ENCODE measurements at regions of chrX and their contacts with region 1.

Region 1: DNA sequence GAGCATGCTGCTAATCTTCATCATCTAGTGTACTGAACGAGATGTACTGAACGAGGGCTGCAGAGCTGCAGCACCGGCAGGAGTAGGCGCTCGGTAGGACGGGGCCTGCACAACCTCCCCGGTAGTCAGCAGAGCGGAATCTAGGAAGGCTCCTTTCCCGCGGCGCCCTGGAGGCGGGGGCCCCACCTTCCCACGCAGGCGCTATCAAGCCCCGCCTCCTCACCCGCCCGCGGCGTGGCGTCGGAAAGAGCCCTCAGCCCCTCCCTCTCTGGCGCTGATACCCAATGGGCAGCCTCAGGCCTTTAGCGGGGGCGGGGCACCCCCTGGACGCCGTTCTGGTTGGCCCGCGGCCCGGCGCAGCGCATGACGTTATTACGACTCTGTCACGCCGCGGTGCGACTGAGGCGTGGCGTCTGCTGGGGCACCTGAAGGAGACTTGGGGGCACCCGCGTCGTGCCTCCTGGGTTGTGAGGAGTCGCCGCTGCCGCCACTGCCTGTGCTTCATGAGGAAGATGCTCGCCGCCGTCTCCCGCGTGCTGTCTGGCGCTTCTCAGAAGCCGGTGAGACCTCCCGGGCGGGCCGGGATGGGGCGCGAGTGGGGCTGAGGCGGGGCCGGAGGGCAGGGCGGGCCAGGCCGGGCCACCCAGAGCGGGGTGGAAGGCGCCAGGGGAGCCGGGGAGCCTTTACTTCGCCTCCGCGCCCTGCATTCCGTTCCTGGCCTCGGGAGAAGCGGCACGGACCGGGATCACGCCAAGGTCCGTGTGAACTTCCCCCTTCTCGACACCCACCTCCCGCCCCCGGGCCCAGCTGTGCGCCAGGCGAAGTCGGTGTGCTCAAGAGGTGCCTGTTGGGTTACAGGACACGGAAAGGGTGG is at the start of gene PDHA1:
- DNase-seq: peak; percentile 92
- H3K4me3 ChIP-seq: peak within 1 kb of the TSS; percentile 66 to 90 (median 87)
- H3K27ac ChIP-seq: peak within 1 kb of the TSS; percentile 13
- H3K4me1 ChIP-seq: peaks cover 11% of the 10 kb centered on the region
- H3K27me3 ChIP-seq: no peaks in the 10 kb centered on the region
- CTCF ChIP-seq: no peak
- POLR2A ChIP-seq: peak; percentile 73
- total RNA-seq, gene PDHA1: 138 and 162 TPM in 2 replicates

Region 2: DNA sequence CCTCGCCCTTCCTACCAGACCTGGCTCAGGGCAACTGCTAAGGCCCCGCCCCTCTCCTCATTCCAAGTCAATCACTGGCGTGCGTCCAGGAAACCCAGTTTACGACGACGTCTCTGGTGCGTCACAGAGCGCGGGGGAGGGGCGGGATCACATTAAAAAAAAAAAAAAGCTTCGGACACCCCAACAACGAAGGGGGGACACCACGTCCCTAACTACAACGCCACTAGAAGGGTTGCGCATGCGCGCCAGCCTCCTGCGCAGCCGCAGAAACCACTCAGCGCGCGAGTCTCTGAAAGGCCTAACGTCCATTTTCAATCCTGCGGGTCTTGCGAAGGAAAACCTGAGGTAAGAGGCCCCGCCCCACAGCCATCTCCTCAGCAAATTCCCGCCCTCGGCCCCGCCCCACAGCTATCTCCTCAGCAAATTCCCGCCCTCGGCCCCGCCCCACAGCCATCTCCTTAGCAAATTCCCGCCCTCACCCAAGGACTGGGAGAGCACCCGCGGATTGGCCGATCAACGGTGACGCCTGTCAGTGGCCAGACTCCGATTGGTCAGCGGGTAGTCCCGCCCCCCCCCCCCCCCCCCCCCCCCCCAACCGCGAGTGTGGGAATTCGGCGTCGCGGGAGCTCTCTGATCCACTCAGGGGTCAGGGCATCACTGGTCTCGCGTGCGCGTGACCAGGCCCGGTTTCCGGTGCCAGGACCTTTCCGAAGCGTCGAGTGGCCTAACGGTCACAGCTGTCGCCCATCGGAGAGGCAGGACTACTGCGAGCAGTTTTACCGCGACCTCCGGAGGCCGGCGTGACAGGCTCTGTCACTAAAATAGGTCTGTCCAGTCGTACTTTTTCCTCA is 1606.7 kb before region 1 on chrX and contains the start of gene SCML1:
- CTCF ChIA-PET with region 1: no interaction called
- POLR2A ChIA-PET with region 1: no interaction called
- dilution Hi-C with region 1: no loop called
- intact Hi-C with region 1: loop called (anchors 2 kb)
- DNase-seq: peak; percentile 97
- H3K4me3 ChIP-seq: peak within 1 kb of the TSS; percentile 61 to 88 (median 63)
- H3K27ac ChIP-seq: peak within 1 kb of the TSS; percentile 77
- H3K4me1 ChIP-seq: no peaks in the 10 kb centered on the region
- H3K27me3 ChIP-seq: no peaks in the 10 kb centered on the region
- CTCF ChIP-seq: no peak
- POLR2A ChIP-seq: no peak
- total RNA-seq, gene SCML1: 10.1 and 12.4 TPM in 2 replicates

Region 3: GRCh38 chrX:19270727-19271126 is 73.0 kb before region 1 on chrX:
- CTCF ChIA-PET with region 1: no interaction called
- POLR2A ChIA-PET with region 1: no interaction called
- dilution Hi-C with region 1: no loop called
- intact Hi-C with region 1: no loop called
- DNase-seq: no peak
- H3K4me3 ChIP-seq: no peak overlapping the region
- H3K27ac ChIP-seq: no peak overlapping the region
- H3K4me1 ChIP-seq: no peaks in the 10 kb centered on the region
- H3K27me3 ChIP-seq: no peaks in the 10 kb centered on the region
- CTCF ChIP-seq: no peak
- POLR2A ChIP-seq: no peak